ENCODE measurements at regions of chr16 and their contacts with region 1.

Region 1: GRCh38 chr16:89171463-89172170 is at the start of gene CDH15:
- DNase-seq: peak; percentile 92 to 99 (median 95)
- ATAC-seq: peak; percentile 96
- H3K4me3 ChIP-seq: peak within 1 kb of the TSS; percentile 53
- H3K4me3 Mint-ChIP-seq: peak within 1 kb of the TSS; percentile 79
- H3K27ac ChIP-seq: no peak within 1 kb of the TSS
- H3K27ac Mint-ChIP-seq: no peak within 1 kb of the TSS
- H3K4me1 ChIP-seq: peaks cover 30% of the 10 kb centered on the region
- H3K4me1 Mint-ChIP-seq: peaks cover 8% of the 10 kb centered on the region
- H3K27me3 ChIP-seq: no peaks in the 10 kb centered on the region
- H3K27me3 Mint-ChIP-seq: peaks cover 4% of the 10 kb centered on the region
- CTCF ChIP-seq: no peak
- total RNA-seq, gene CDH15: not detected

Region 2: DNA sequence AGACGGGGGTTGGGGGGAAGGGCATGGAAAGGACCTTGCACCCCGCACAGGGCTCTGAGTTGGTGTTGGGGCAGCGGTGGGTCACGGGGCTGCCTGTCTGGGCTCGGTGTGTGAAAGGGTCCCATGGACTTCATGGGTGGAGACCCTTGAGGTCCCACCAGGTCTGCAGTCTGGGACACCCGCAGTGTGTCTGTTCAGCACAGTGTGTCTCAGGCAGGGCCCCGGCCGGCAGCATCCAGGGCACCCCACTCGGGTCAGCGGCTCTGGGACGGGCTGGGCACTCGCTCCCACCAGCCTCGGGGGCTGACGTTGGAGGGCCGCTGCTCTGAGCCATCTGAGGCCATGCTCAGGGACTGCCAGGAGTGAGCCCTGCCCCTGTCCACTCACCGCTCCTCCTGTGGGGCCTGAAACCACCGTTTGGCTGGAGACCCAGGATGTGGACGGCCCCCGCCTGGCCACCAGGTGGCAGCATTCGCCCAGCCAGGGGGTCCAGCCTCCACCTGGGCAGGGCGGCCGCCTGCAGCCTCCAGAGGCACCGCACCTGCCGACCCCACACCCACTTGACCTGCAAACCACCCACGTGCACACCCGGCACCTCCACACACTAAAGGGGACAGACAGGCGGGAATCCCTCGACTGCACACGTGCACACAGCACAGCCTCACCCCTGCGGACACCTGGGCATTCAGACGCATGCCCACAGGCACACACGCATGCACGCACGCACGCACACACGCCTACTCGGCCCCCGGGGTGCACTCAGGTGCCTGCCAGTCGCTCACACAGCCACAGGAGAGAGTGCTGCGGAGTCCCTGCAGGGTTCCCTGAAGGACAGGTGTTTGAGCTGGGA is 728.7 kb before region 1 on chr16:
- CTCF ChIA-PET with region 1: no interaction called
- POLR2A ChIA-PET with region 1: no interaction called
- intact Hi-C with region 1: loop called in 1 of 2 experiments (anchors 2 kb)
- DNase-seq: peak; percentile 60 to 90 (median 78)
- ATAC-seq: peak; percentile 88
- H3K4me3 ChIP-seq: no peak overlapping the region
- H3K4me3 Mint-ChIP-seq: no peak overlapping the region
- H3K27ac ChIP-seq: no peak overlapping the region
- H3K27ac Mint-ChIP-seq: no peak overlapping the region
- H3K4me1 ChIP-seq: peaks cover 8% of the 10 kb centered on the region
- H3K4me1 Mint-ChIP-seq: no peaks in the 10 kb centered on the region
- H3K27me3 ChIP-seq: no peaks in the 10 kb centered on the region
- H3K27me3 Mint-ChIP-seq: no peaks in the 10 kb centered on the region
- CTCF ChIP-seq: peak; percentile 94

Region 3: GRCh38 chr16:88737298-88738150 is 434.1 kb before region 1 on chr16:
- CTCF ChIA-PET with region 1: interaction called, 3 read pairs
- POLR2A ChIA-PET with region 1: no interaction called
- intact Hi-C with region 1: loop called (anchors 1 to 5 kb)
- DNase-seq: peak; percentile 44 to 89 (median 72)
- ATAC-seq: peak; percentile 98
- H3K4me3 ChIP-seq: no peak overlapping the region
- H3K4me3 Mint-ChIP-seq: no peak overlapping the region
- H3K27ac ChIP-seq: no peak overlapping the region
- H3K27ac Mint-ChIP-seq: no peak overlapping the region
- H3K4me1 ChIP-seq: peaks cover 15% of the 10 kb centered on the region
- H3K4me1 Mint-ChIP-seq: no peaks in the 10 kb centered on the region
- H3K27me3 ChIP-seq: no peaks in the 10 kb centered on the region
- H3K27me3 Mint-ChIP-seq: no peaks in the 10 kb centered on the region
- CTCF ChIP-seq: peak; percentile 98

Region 4: GRCh38 chr16:88811769-88812512 is 359.7 kb before region 1 on chr16 and contains the start of gene APRT:
- CTCF ChIA-PET with region 1: no interaction called
- POLR2A ChIA-PET with region 1: no interaction called
- intact Hi-C with region 1: loop called in 1 of 2 experiments (anchors 2 kb)
- DNase-seq: peak; percentile 93 to 99 (median 98)
- ATAC-seq: peak; percentile 90
- H3K4me3 ChIP-seq: peak within 1 kb of the TSS; percentile 75
- H3K4me3 Mint-ChIP-seq: peak within 1 kb of the TSS; percentile 99
- H3K27ac ChIP-seq: peak within 1 kb of the TSS; percentile 64 to 70
- H3K27ac Mint-ChIP-seq: peak within 1 kb of the TSS; percentile 95
- H3K4me1 ChIP-seq: peaks cover 29% of the 10 kb centered on the region
- H3K4me1 Mint-ChIP-seq: peaks cover 4% of the 10 kb centered on the region
- H3K27me3 ChIP-seq: no peaks in the 10 kb centered on the region
- H3K27me3 Mint-ChIP-seq: no peaks in the 10 kb centered on the region
- CTCF ChIP-seq: no peak
- total RNA-seq, gene APRT: 153 to 154 TPM

Region 5: GRCh38 chr16:88941913-88942909 is 229.4 kb before region 1 on chr16:
- CTCF ChIA-PET with region 1: interaction called, 5 read pairs
- POLR2A ChIA-PET with region 1: interaction called, 4 read pairs
- intact Hi-C with region 1: loop called (anchors 1 to 2 kb)
- DNase-seq: peak; percentile 31 to 79 (median 51)
- ATAC-seq: peak; percentile 74
- H3K4me3 ChIP-seq: no peak overlapping the region
- H3K4me3 Mint-ChIP-seq: peak overlapping the region; percentile 56
- H3K27ac ChIP-seq: no peak overlapping the region
- H3K27ac Mint-ChIP-seq: no peak overlapping the region
- H3K4me1 ChIP-seq: peaks cover 40% of the 10 kb centered on the region
- H3K4me1 Mint-ChIP-seq: peaks cover 8% of the 10 kb centered on the region
- H3K27me3 ChIP-seq: peaks cover 45 to 53% of the 10 kb centered on the region in 2 experiments
- H3K27me3 Mint-ChIP-seq: peaks cover 48% of the 10 kb centered on the region
- CTCF ChIP-seq: peak; percentile 58

Region 6: GRCh38 chr16:89052890-89053592 is 118.6 kb before region 1 on chr16:
- CTCF ChIA-PET with region 1: no interaction called
- POLR2A ChIA-PET with region 1: no interaction called
- intact Hi-C with region 1: no loop called
- DNase-seq: peak in 4 of 14 experiments; percentile 19 to 66 (median 25)
- ATAC-seq: no peak
- H3K4me3 ChIP-seq: no peak overlapping the region
- H3K4me3 Mint-ChIP-seq: no peak overlapping the region
- H3K27ac ChIP-seq: no peak overlapping the region
- H3K27ac Mint-ChIP-seq: no peak overlapping the region
- H3K4me1 ChIP-seq: peaks cover 16% of the 10 kb centered on the region
- H3K4me1 Mint-ChIP-seq: no peaks in the 10 kb centered on the region
- H3K27me3 ChIP-seq: no peaks in the 10 kb centered on the region
- H3K27me3 Mint-ChIP-seq: no peaks in the 10 kb centered on the region
- CTCF ChIP-seq: no peak

Region 7: GRCh38 chr16:89193021-89193575 is 21.5 kb after region 1 on chr16:
- CTCF ChIA-PET with region 1: no interaction called
- POLR2A ChIA-PET with region 1: interaction called, 4 read pairs
- intact Hi-C with region 1: loop called in 1 of 2 experiments (anchors 1 kb)
- DNase-seq: peak in 6 of 14 experiments; percentile 26 to 80 (median 60)
- ATAC-seq: peak; percentile 50
- H3K4me3 ChIP-seq: no peak overlapping the region
- H3K4me3 Mint-ChIP-seq: no peak overlapping the region
- H3K27ac ChIP-seq: no peak overlapping the region
- H3K27ac Mint-ChIP-seq: no peak overlapping the region
- H3K4me1 ChIP-seq: peaks cover 18% of the 10 kb centered on the region
- H3K4me1 Mint-ChIP-seq: peaks cover 4% of the 10 kb centered on the region
- H3K27me3 ChIP-seq: no peaks in the 10 kb centered on the region
- H3K27me3 Mint-ChIP-seq: peaks cover 5% of the 10 kb centered on the region
- CTCF ChIP-seq: no peak